ENCODE measurements at regions of chr3 and their contacts with region 1.

Region 1: GRCh38 chr3:94716326-94717010 is 653.6 kb downstream of the NSUN3 start:
- DNase-seq: no peak
- ATAC-seq: no peak

Region 2: DNA sequence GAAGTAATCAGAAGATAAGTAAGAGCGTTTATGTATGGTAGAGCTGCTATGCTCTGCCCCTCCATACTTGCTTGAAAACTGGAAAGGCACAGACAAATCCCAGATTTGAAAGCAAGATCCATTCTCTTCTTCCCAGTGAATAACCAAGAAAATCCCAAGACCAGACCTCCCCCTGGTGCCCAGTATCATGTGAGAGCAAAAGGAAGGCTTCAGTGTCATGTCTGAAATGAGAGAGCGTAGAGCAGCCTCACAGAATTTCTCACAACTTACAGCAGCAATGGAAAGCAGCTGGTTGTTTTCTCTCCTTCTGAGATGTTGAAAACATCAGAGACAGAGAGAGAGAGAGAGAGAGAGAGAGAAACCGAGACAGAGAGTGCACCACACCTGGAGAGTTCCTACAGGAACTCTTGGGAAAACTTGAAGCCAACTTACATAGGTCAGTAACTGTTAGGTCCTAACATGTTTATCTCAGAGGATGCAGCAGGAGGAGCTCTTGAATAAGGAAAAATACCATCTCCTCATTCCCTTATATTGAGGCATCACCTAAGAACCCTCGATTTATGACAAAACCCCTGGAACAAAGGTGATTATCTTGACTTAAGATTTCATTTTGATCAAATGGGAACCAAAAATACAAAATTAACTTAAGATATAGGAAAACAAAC is 380.3 kb before region 1 on chr3:
- intact Hi-C with region 1: loop called (anchors 5 kb)
- DNase-seq: no peak
- ATAC-seq: peak; percentile 79

Region 3: DNA sequence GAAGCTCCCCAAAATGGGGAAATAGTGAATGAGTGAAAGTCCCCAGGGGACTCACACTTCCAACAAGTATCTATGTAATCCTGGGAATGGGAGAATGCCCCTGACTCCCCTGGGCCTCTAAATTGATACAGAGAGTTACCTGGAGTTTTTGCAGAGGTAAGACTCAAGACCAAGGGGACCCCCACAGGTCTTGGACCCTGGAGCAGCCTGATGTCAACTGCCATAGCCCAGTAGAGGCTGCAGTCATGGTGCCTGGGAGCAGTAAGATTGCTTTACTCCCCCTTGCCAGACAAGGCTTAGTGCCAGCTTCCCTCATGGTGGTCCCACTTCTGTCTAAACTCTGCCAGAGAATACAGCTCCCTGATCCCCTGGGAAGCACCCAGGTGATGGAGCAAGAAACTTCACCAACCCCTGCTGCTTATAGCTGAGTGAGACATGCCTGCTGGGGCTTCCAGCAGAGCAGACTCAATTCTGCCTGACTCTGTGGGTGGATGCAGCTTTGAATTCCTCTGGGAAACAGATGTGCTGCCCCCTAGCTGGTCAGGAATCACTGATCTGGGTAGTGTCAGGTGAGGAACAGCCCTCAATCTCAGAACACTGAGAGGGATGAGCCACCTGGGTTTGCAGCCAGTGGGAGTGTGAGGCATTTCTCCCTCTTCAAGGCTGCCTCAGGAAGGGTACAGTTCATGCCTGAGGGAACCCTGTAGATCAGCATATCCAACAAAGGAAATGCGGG is 167.7 kb before region 1 on chr3:
- intact Hi-C with region 1: no loop called
- DNase-seq: peak; percentile 16
- ATAC-seq: no peak

Region 4: DNA sequence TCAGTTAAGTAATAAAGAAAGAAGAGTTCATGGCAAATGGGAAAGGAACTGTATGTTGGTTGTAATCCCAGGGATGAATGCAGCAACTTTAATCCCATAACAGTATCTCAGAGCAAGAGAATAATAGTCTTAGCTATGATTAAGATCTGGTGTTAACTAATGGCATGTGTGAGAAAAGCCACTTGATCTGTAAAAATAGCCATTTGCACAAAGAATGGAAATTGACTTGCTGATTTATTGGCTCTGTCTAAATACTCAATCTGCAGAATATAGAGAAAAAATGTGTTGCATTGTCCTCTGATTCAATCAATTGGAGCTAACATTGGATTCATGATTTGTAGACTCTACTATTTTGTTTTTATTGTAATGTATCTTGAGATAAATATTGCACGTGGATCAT is 333.4 kb after region 1 on chr3:
- intact Hi-C with region 1: no loop called
- DNase-seq: no peak
- ATAC-seq: no peak

Measured in Right ventricle myocardium inferior (tissue), 1 donor.